CD8-positive, alpha-beta memory T cell (primary cell): ENCODE measurements at regions of chr20 and their contacts with region 1.

Region 1: GRCh38 chr20:44979090-44979621 is 12.8 kb downstream of the STK4 start:
- DNase-seq: peak; percentile 54 to 86 (median 83)
- H3K4me3 ChIP-seq: peak overlapping the region; percentile 39
- H3K4me3 Mint-ChIP-seq: peak overlapping the region; percentile 68 to 91 (median 77)
- H3K27ac ChIP-seq: peak overlapping the region; percentile 76
- H3K27ac Mint-ChIP-seq: peak overlapping the region; percentile 88 to 99 (median 96)
- H3K4me1 ChIP-seq: peaks cover 88% of the 10 kb centered on the region
- H3K4me1 Mint-ChIP-seq: peaks cover 77 to 94% (median 93%) of the 10 kb centered on the region in 3 donors
- H3K27me3 ChIP-seq: no peaks in the 10 kb centered on the region
- H3K27me3 Mint-ChIP-seq: no peaks in the 10 kb centered on the region

Region 2: DNA sequence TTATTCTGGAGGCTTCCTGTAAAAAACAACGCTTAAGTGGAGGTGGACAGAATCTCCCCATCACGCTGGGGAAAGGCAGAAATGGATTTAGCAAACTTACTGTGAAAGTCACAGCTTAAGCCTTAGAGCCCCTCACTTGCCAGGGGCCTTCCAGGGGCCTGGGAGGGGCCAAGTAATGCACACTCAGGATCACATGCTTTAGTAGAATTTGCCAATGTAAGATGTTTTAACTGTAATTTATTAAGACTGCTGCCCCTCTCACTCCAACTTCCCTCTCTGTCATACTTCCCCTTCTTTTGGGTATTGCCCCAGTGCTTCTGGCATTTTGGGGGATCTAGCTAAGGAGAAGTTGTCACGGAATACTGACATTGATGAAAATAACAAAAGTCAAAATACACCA is 315.0 kb before region 1 on chr20:
- CTCF ChIA-PET with region 1: no interaction called
- POLR2A ChIA-PET with region 1: no interaction called
- DNase-seq: no peak
- H3K4me3 ChIP-seq: no peak overlapping the region
- H3K4me3 Mint-ChIP-seq: no peak overlapping the region
- H3K27ac ChIP-seq: no peak overlapping the region
- H3K27ac Mint-ChIP-seq: no peak overlapping the region
- H3K4me1 ChIP-seq: no peaks in the 10 kb centered on the region
- H3K4me1 Mint-ChIP-seq: peaks cover 0 to 38% (median 28%) of the 10 kb centered on the region in 3 donors
- H3K27me3 ChIP-seq: no peaks in the 10 kb centered on the region
- H3K27me3 Mint-ChIP-seq: no peaks in the 10 kb centered on the region

Region 3: DNA sequence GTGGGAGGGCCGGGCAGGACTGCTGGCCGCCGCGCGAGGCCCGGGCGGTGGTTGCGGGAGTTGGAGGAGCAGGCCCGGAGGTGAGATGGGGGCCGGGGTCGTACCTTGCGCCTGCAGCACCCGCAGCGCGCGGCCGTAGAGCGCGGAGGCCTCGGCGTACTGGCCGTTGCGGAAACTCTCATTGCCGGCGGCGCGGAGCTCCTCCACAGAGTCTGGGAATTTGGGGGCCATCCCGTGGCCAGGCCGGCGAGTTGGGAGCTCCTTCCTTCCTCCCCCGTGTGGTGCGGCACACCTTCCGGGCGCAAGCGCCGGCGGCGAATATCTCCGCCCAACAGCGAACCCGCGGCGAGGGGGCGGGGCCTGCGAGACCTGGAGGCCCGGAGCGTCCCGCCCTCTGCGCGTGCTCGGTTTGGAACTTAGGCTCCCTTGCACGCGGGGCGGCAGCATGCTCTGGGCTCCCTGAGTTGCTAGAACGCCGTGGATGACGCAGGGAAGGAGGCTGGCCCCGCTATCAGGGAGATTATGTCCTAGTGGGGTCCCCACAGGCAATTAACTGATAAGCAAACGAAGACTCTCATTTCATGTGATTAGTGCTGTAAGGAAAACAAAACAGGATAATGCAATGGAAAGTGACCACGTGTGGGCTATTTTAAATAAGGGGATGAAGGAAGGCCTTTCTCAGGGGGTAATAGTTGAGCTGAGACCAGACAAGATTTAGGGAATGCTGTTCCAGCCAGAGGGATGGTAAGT is 18.9 kb before region 1 on chr20 and contains the start of gene TOMM34:
- CTCF ChIA-PET with region 1: interaction called, 35 read pairs
- POLR2A ChIA-PET with region 1: interaction called, 16 read pairs
- DNase-seq: peak; percentile 90 to 95 (median 94)
- H3K4me3 ChIP-seq: peak within 1 kb of the TSS; percentile 72
- H3K4me3 Mint-ChIP-seq: peak within 1 kb of the TSS; percentile 94 to 99 (median 96)
- H3K27ac ChIP-seq: peak within 1 kb of the TSS; percentile 58
- H3K27ac Mint-ChIP-seq: peak within 1 kb of the TSS; percentile 79 to 99 (median 96)
- H3K4me1 ChIP-seq: peaks cover 36% of the 10 kb centered on the region
- H3K4me1 Mint-ChIP-seq: peaks cover 36 to 55% (median 39%) of the 10 kb centered on the region in 3 donors
- H3K27me3 ChIP-seq: no peaks in the 10 kb centered on the region
- H3K27me3 Mint-ChIP-seq: no peaks in the 10 kb centered on the region
- total RNA-seq, gene TOMM34: 75.4 to 76.8 TPM

Region 4: GRCh38 chr20:44966030-44966961 is 12.9 kb before region 1 on chr20 and contains the start of gene STK4:
- CTCF ChIA-PET with region 1: interaction called, 35 read pairs
- POLR2A ChIA-PET with region 1: interaction called, 52 read pairs
- DNase-seq: peak; percentile 92 to 97 (median 94)
- H3K4me3 ChIP-seq: peak within 1 kb of the TSS; percentile 99
- H3K4me3 Mint-ChIP-seq: peak within 1 kb of the TSS; percentile 94 to 99 (median 96)
- H3K27ac ChIP-seq: peak within 1 kb of the TSS; percentile 89
- H3K27ac Mint-ChIP-seq: peak within 1 kb of the TSS; percentile 89 to 100 (median 94)
- H3K4me1 ChIP-seq: peaks cover 24% of the 10 kb centered on the region
- H3K4me1 Mint-ChIP-seq: peaks cover 40 to 48% (median 40%) of the 10 kb centered on the region in 3 donors
- H3K27me3 ChIP-seq: no peaks in the 10 kb centered on the region
- H3K27me3 Mint-ChIP-seq: peaks cover 0 to 3% of the 10 kb centered on the region in 2 donors
- total RNA-seq, gene STK4: 200 to 210 TPM